ENCODE measurements at regions of chr1 and their contacts with region 1.

Region 1: DNA sequence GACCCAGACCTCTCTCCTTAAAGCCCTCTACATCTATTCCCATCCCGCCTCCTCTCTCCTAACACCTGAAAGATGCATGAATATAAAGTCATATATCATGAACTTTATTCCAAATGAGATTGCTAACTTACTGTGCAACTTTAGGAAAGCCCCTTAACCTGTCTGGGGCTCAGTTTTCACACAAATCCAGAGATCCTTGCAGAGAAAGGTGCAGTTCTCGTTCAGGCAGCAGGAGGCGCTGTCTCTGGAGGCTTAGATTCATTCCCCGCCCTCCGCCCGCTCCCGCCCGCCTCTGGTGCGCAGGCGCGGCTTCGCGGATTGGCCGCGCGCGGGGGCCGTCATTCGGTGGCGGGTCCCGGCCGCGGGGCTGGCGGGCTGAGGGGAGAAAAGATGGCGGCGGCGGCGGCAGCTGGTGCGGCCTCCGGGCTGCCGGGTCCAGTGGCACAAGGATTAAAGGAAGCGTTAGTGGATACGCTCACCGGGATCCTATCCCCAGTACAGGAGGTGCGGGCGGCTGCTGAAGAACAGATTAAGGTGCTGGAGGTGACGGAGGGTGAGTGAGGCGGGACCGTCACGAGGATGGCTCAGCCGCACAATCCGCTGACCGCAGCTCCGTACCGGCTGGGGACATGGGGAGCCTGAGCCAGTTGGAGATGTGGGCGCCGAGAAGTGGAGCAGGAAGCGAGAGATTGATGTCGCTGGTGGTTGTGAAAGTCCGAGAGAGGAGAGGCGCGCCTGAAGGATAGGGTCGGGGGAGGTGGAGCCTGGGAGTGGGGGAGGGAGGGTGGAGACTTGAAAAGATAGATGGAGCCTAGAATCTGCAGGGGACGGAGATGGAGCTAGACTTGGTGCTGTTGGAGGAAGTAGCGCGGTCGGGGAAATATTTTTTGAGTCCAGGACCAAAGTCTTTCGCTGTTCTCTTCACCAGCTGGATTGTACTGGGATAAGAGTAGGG is at the start of gene IPO9:
- DNase-seq: peak; percentile 98 to 100 (median 99)
- ATAC-seq: peak; percentile 92
- H3K4me3 ChIP-seq: peak within 1 kb of the TSS; percentile 94
- H3K27ac ChIP-seq: peak within 1 kb of the TSS; percentile 95
- H3K4me1 ChIP-seq: peaks cover 12 to 42% of the 10 kb centered on the region in 2 experiments
- H3K27me3 ChIP-seq: no peaks in the 10 kb centered on the region
- CTCF ChIP-seq: peak; percentile 92 to 98 (median 97)
- EP300 ChIP-seq: peak; percentile 6; the same call in 1 of the 2 replicates
- POLR2A ChIP-seq: peak; percentile 98
- RAD21 ChIP-seq: peak in 1 of 2 experiments; percentile 16; a peak in 1 of 4 replicates
- polyA plus RNA-seq, gene IPO9: 28.1 to 49.6 TPM

Region 2: DNA sequence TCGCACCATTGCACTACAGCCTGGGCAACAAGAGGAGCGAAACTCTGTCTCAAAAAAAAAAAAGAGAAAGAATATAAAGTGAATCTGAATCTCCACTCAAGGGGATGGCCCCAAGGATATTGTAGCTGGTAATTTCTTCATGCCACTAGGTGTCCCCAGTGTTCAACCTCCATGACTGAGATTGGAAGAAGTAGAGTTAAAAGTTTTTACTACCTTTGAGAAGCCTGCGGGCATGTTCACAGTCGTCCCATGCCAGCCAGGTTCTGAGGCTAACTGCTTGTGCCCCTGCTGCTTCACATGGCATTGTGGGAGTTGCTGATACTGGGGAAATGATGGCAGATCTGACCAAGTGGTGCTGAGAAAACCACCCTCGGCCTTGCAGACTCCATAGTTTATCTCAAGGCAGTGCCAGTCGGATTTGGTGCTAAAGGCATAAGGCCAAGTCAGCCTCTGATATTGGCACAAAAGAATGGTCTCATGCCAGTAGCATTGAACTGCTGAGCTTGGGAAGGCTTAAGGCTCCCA is 48.8 kb after region 1 on chr1:
- CTCF ChIA-PET with region 1: no interaction called
- POLR2A ChIA-PET with region 1: interaction called, 4 read pairs
- in situ Hi-C with region 1: no loop called
- intact Hi-C with region 1: loop called (anchors 5 kb)
- DNase-seq: peak; percentile 55 to 73 (median 58)
- ATAC-seq: peak; percentile 81
- H3K4me3 ChIP-seq: no peak overlapping the region
- H3K27ac ChIP-seq: no peak overlapping the region
- H3K4me1 ChIP-seq: peaks cover 0 to 9% of the 10 kb centered on the region in 2 experiments; a peak in 3 of 5 replicates
- H3K27me3 ChIP-seq: no peaks in the 10 kb centered on the region
- CTCF ChIP-seq: peak; percentile 67 to 82 (median 76)
- EP300 ChIP-seq: no peak
- POLR2A ChIP-seq: peak; percentile 62
- RAD21 ChIP-seq: peak; percentile 27 to 75; a peak in 3 of 4 replicates